ENCODE measurements at regions of chr4 and their contacts with region 1.

Region 1: GRCh38 chr4:498328-498904 is 540 bp downstream of the ZNF721 start:
- DNase-seq: no peak
- H3K4me3 ChIP-seq: peak overlapping the region; percentile 97
- H3K27ac ChIP-seq: peak overlapping the region; percentile 60
- H3K4me1 ChIP-seq: peaks cover 11% of the 10 kb centered on the region
- H3K27me3 ChIP-seq: no peaks in the 10 kb centered on the region
- CTCF ChIP-seq: no peak

Region 2: DNA sequence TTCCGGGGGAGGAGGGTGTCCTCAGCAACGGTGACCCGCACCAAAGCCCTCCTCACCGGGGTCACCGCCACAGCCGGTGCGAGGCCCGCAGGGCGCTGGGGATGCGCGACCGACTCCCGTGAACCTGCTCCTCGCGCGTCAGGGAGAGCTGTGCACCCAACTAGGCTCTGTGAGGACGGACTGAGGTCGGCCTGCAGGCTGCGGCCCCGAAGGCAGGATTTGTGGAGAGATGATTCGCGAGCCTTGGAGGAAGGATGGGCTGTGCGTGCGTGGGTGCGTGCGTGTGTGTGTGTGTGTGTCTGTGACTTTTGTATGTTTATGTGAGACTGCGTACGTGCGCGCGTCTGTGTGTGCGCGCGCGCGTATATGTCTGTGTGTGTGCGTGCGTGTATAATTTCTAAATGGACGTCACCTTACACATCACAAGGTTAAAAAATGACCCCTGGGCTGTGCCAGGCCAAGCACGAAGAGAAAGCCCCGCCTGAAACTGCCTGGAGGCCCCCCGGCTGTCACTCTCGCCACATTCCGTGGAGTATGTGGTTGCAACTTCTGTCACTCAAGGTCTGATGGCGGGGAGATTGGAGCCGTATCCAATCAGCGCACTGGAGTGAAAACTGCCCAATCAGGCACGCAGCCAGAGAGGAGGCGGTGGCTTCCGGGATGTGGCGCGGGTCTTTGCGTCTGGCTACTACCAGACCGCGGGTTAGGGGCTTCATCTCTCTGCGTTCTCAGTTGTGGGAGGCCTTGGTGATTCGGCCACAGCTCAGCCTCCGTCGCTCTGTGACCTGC is 161.1 kb before region 1 on chr4 and contains the start of gene ZNF141:
- CTCF ChIA-PET with region 1: no interaction called
- POLR2A ChIA-PET with region 1: no interaction called
- intact Hi-C with region 1: loop called (anchors 2 kb)
- DNase-seq: peak; percentile 80 to 87
- H3K4me3 ChIP-seq: peak within 1 kb of the TSS; percentile 59
- H3K27ac ChIP-seq: no peak within 1 kb of the TSS
- H3K4me1 ChIP-seq: no peaks in the 10 kb centered on the region
- H3K27me3 ChIP-seq: no peaks in the 10 kb centered on the region
- CTCF ChIP-seq: no peak
- total RNA-seq, gene ZNF141: 12.7 and 12.9 TPM in 2 replicates

Region 3: DNA sequence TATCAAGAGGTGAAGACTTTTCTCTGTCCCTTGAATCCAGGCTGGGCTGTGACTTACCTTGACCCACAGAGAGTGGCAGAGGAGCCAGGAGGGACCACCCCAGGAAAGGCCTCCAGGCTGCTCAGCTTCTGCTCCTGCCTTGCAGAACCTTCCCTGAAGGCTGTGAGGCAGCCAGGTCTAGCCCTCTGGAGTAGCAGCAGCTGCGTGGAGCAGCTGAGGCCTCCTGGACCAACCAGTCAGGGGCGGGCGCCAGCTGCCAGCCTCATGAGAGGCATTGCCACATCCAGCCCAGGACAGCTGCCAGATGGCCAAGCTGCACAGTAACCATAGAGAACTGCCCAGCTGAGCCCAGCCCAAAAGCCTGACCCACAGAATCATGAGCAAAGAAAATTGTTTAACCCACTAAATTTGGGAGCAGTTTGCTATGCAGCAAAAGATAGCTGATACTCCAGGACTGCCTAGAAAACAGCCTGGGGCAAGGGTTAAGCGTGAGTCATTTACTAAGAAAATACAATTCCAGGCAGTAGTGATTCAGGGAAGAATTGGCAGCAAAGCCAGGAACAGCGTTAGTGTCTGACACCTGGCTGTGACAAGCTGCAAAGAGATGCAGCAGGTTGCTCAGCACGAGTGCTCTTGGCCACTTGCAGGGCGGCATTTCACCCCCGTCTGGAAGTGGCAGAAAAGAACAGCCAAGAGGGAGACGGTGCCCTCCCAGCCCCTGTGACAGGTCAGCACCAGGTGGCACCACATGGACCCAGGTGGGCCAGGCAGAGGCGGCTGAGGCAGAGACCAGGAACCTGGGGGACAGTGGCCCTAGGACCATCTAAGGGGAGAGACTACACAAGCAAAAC is 112.2 kb after region 1 on chr4:
- CTCF ChIA-PET with region 1: no interaction called
- POLR2A ChIA-PET with region 1: interaction called, 24 read pairs
- intact Hi-C with region 1: no loop called
- DNase-seq: peak; percentile 84 to 96
- H3K4me3 ChIP-seq: no peak overlapping the region
- H3K27ac ChIP-seq: no peak overlapping the region
- H3K4me1 ChIP-seq: peaks cover 25% of the 10 kb centered on the region
- H3K27me3 ChIP-seq: peaks cover 50% of the 10 kb centered on the region
- CTCF ChIP-seq: no peak

Measured in PC-9 (cell line).